ENCODE measurements at regions of chr3 and their contacts with region 1.

Region 1: GRCh38 chr3:183265834-183266417 is 12.9 kb downstream of the B3GNT5 start:
- DNase-seq: peak; percentile 7
- H3K4me3 Mint-ChIP-seq: peak overlapping the region; percentile 25
- H3K27ac Mint-ChIP-seq: no peak overlapping the region
- H3K4me1 Mint-ChIP-seq: peaks cover 15% of the 10 kb centered on the region
- H3K27me3 Mint-ChIP-seq: no peaks in the 10 kb centered on the region

Region 2: GRCh38 chr3:183158551-183159006 is 107.3 kb before region 1 on chr3:
- intact Hi-C with region 1: loop called (anchors 1 kb)
- DNase-seq: peak; percentile 33
- H3K4me3 Mint-ChIP-seq: peak overlapping the region; percentile 45
- H3K27ac Mint-ChIP-seq: peak overlapping the region; percentile 73
- H3K4me1 Mint-ChIP-seq: peaks cover 48% of the 10 kb centered on the region
- H3K27me3 Mint-ChIP-seq: no peaks in the 10 kb centered on the region

Region 3: GRCh38 chr3:183224180-183224970 is 41.6 kb before region 1 on chr3:
- intact Hi-C with region 1: loop called (anchors 1 kb)
- DNase-seq: peak; percentile 52
- H3K4me3 Mint-ChIP-seq: peak overlapping the region; percentile 53
- H3K27ac Mint-ChIP-seq: peak overlapping the region; percentile 88
- H3K4me1 Mint-ChIP-seq: peaks cover 44% of the 10 kb centered on the region
- H3K27me3 Mint-ChIP-seq: no peaks in the 10 kb centered on the region

Region 4: GRCh38 chr3:183252973-183253901 is 12.7 kb before region 1 on chr3 and contains the start of gene B3GNT5:
- intact Hi-C with region 1: loop called (anchors 1 kb)
- DNase-seq: peak; percentile 11
- H3K4me3 Mint-ChIP-seq: peak within 1 kb of the TSS; percentile 81
- H3K27ac Mint-ChIP-seq: peak within 1 kb of the TSS; percentile 52
- H3K4me1 Mint-ChIP-seq: peaks cover 18% of the 10 kb centered on the region
- H3K27me3 Mint-ChIP-seq: peaks cover 10% of the 10 kb centered on the region
- total RNA-seq, gene B3GNT5: 17.0 and 17.7 TPM in 2 replicates

Region 5: DNA sequence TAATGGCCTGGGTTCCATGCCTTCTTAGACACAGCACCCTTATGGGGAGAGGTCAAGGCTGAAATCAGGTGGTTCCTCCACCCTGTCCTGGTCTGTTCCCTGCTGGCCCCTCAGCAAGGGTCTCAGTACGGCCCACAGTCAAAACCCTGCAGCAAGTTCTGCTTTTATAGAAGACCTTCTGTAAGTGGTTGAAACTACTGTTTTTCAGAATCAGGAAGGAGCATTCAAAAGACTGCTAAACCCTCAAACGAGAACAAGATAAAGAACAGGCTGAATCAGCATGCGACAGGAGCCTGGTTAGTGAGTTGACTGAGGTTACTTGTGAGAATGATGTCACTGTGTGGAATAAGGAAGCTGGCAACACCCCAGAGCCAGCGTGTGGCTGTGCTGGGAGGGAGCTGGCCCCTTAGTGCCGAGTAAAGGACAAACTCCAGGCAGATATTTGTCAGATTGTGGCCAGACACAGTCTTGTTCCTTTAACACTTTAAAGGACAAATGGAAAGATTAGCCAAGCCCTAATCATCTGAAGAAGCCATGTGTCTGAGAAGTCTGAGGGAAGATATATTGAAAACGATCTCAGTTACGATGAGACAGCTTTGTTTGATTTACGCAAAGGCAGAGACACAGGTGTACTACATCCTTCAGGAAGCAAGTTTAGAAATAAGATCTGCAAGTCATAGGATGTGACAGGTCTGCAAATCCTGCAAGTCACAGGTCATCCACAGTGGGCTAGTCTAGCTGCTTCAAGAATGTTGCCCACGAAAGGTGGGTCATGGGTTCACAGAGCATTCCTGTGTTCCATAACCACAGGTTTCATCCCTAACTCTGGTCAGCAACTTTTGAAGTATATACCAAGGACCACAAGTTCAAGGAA is 41.1 kb after region 1 on chr3:
- intact Hi-C with region 1: loop called (anchors 5 kb)
- DNase-seq: peak; percentile 28
- H3K4me3 Mint-ChIP-seq: peak overlapping the region; percentile 53
- H3K27ac Mint-ChIP-seq: peak overlapping the region; percentile 72
- H3K4me1 Mint-ChIP-seq: peaks cover 39% of the 10 kb centered on the region
- H3K27me3 Mint-ChIP-seq: no peaks in the 10 kb centered on the region

Region 6: DNA sequence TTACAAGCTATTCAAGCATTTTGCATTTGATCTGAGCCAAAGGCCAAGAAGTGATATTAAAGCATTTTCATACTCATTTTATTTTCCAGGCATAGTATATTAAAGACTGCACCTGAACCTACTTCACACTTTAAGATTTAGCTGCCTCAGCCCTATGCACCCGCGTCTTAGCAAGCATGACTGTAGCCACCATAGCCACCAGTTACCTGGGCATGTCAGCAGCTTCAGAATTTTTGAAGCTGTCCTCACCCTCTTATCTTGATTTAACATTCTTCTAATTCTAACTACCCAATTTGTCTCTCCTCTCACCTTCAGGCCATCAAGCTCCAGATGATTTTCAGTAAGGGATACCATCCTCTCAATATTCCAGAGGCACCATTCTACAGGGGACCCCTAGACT is 328.7 kb after region 1 on chr3:
- intact Hi-C with region 1: no loop called
- DNase-seq: no peak
- H3K4me3 Mint-ChIP-seq: no peak overlapping the region
- H3K27ac Mint-ChIP-seq: no peak overlapping the region
- H3K4me1 Mint-ChIP-seq: peaks cover 17% of the 10 kb centered on the region
- H3K27me3 Mint-ChIP-seq: no peaks in the 10 kb centered on the region

Region 7: GRCh38 chr3:183725387-183725786 is 459.5 kb after region 1 on chr3:
- intact Hi-C with region 1: no loop called
- DNase-seq: no peak
- H3K4me3 Mint-ChIP-seq: no peak overlapping the region
- H3K27ac Mint-ChIP-seq: no peak overlapping the region
- H3K4me1 Mint-ChIP-seq: no peaks in the 10 kb centered on the region
- H3K27me3 Mint-ChIP-seq: no peaks in the 10 kb centered on the region

Measured in activated T-helper 1 cell treated with anti-CD3 and anti-CD28 coated beads, Interleukin-12 subunit alpha, Interleukin-12 subunit beta, Interleukin-2, Interleukin-4 antibody, amounts not matched to agents 30 ng/mL and 10 ng/mL and 1 ng/mL, durations not matched to agents 14 hours and 24 hours and 36 hours (primary cell).